ENCODE measurements at regions of chr5 and their contacts with region 1.

Region 1: DNA sequence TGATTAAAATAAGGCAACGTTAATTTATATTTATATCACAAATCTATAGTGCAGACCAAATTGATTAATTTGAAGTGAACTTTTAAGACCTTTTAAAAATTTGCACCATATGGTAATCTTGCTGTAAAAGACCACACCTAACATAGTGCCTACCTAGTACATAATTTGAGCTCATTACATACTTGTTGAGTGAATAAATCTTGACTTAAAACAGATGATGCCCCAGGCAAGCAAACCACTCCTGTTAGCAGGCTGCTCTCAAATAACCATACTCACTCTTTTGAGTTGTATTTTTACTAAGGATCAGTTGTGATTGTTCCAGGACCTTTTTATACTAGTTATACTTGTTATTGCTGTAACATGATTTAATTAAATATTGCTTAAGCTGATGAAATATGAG is 27.2 kb downstream of the CMYA5 start:
- DNase-seq: no peak
- H3K4me3 ChIP-seq: no peak overlapping the region
- H3K27me3 ChIP-seq: no peaks in the 10 kb centered on the region
- CTCF ChIP-seq: no peak

Region 2: GRCh38 chr5:79702606-79703382 is 14.0 kb before region 1 on chr5:
- CTCF ChIA-PET with region 1: interaction called, 14 read pairs
- POLR2A ChIA-PET with region 1: no interaction called
- DNase-seq: peak; percentile 41
- H3K4me3 ChIP-seq: no peak overlapping the region
- H3K27me3 ChIP-seq: no peaks in the 10 kb centered on the region
- CTCF ChIP-seq: peak; percentile 51

Region 3: GRCh38 chr5:79816014-79816413 is 99.2 kb after region 1 on chr5:
- CTCF ChIA-PET with region 1: no interaction called
- POLR2A ChIA-PET with region 1: no interaction called
- DNase-seq: no peak
- H3K4me3 ChIP-seq: no peak overlapping the region
- H3K27me3 ChIP-seq: no peaks in the 10 kb centered on the region; the same call in 1 of the 2 replicates
- CTCF ChIP-seq: no peak

Region 4: GRCh38 chr5:79990598-79991507 is 274.0 kb after region 1 on chr5 and contains the start of gene MTX3:
- CTCF ChIA-PET with region 1: no interaction called
- POLR2A ChIA-PET with region 1: no interaction called
- DNase-seq: peak; percentile 31
- H3K4me3 ChIP-seq: peak within 1 kb of the TSS; percentile 98
- H3K27me3 ChIP-seq: no peaks in the 10 kb centered on the region
- CTCF ChIP-seq: no peak
- polyA plus RNA-seq, gene MTX3: 5.1 and 9.6 TPM in 2 replicates

Measured in BJ (cell line).